Psoas muscle (tissue), 8 donors: ENCODE measurements at regions of chr17 and their contacts with region 1.

Region 1: DNA sequence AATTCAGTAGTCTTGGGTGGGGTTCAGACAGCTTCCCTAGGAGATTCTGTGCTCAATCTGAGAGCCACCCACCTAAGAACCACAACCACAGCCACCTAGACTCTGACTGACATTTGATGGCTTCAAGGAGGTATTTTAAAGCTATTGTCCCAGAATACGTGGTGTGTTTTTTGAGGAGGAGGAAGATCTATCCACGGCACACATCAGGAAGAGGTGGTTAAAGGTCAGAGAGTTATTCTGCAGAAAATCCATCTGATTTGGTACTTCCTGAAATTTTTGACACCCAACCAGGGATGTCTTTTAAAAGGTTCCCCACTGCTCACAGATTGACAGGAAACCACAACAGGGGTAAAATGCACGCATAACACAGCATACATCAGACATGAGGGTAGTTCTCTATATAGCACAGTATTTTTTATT is 25.1 kb downstream of the SMARCE1 start:
- DNase-seq: no peak
- ATAC-seq: no peak
- H3K4me3 ChIP-seq: no peak overlapping the region
- H3K27ac ChIP-seq: no peak overlapping the region
- H3K4me1 ChIP-seq: no peaks in the 10 kb centered on the region
- H3K27me3 ChIP-seq: peaks cover 0 to 35% (median 4%) of the 10 kb centered on the region in 3 donors
- CTCF ChIP-seq: no peak

Region 2: DNA sequence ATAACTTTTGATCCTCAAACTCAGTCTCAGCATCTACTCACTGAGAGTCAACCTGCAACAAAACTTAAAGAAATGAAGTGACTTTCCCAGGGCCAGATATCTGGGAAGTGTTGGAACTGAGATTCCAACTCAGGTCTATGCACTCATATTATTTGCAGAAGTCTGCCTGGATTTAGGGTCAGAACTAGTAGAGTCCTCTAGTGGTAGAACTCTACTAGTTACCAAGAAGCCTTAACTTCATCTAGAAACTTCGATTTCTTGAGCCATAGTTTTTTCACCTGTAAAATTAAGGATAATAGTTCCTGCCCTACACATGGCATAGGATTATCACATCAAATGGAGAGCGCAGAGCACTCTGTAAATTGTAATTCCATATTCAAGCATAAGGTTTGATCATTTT is 104.4 kb after region 1 on chr17:
- intact Hi-C with region 1: loop called in 1 of 2 experiments (anchors 10 kb)
- DNase-seq: no peak
- ATAC-seq: no peak
- H3K4me3 ChIP-seq: no peak overlapping the region
- H3K27ac ChIP-seq: no peak overlapping the region
- H3K4me1 ChIP-seq: no peaks in the 10 kb centered on the region
- H3K27me3 ChIP-seq: peaks cover 0 to 24% (median 0%) of the 10 kb centered on the region in 3 donors
- CTCF ChIP-seq: peak; percentile 21

Region 3: DNA sequence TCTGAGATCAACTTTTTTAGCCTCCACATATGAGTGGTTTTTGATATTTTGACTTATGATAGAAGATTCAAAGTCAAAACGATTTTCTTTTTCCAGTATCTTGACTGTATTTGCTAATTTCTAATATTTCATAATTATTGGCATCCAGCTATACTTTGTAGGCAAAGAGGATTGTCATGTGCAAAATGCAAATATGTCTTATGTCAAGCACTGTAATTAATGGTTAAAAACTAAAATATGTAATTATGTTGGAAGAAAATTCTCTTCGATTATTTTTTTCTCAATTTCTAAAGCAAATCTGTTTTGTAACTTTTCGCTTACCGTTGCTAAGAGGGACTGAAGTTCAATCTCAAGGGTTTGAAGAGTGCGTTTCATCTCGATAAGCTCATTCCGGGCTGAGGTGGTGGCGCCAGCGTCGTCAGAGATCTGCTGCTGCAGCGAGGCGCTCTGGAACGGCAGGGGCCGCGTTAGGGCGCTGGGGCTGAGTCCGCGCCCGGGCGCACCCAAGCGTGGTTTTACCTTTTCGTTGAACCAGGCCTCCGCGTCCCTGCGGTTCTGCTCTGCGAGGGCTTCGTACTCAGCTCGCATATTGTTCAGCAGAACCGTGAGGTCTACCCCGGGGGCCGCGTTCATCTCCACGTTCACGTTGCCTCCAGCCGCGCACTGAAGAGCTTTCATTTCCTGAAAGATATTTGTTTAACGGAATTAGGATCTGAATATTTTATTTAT is 156.8 kb after region 1 on chr17:
- intact Hi-C with region 1: no loop called
- DNase-seq: no peak
- ATAC-seq: no peak
- H3K4me3 ChIP-seq: no peak overlapping the region
- H3K27ac ChIP-seq: no peak overlapping the region
- H3K4me1 ChIP-seq: no peaks in the 10 kb centered on the region
- H3K27me3 ChIP-seq: peaks cover 6 to 48% (median 6%) of the 10 kb centered on the region in 3 donors
- CTCF ChIP-seq: no peak

Region 4: DNA sequence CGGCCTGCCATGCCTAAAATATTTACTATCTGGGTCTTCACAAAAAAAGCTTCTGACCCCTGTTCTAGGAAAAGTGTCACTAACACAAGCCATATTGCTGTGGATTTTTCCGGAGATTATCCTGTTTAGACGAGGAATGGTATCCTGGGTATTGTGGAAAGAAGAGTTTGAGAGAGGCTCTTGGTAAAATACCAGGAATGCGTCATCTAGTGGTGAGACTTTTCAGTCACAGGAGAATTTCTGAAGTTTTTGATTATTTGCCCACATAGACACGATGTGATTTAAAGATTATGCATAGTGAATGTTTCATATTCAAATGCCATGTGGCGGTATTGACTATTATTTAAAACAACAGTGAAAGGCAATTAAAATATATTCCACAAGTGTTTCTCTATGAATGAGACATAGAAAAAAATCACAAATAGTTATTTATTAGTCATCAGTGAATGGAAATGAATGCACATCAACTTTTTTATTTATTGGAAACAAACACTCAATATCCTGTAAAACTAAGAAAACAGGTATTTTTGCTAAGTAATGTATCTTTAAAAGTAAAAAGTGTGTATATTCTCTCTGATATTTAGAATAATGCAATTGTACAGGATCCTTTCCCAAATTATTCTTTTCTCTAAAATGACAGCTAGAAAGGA is 169.4 kb after region 1 on chr17:
- intact Hi-C with region 1: loop called (anchors 5 to 10 kb)
- DNase-seq: no peak
- ATAC-seq: no peak
- H3K4me3 ChIP-seq: no peak overlapping the region
- H3K27ac ChIP-seq: no peak overlapping the region
- H3K4me1 ChIP-seq: no peaks in the 10 kb centered on the region
- H3K27me3 ChIP-seq: no peaks in the 10 kb centered on the region
- CTCF ChIP-seq: peak; percentile 53